Caco-2 (cell line): ENCODE measurements at regions of chr1 and their contacts with region 1.

Region 1: DNA sequence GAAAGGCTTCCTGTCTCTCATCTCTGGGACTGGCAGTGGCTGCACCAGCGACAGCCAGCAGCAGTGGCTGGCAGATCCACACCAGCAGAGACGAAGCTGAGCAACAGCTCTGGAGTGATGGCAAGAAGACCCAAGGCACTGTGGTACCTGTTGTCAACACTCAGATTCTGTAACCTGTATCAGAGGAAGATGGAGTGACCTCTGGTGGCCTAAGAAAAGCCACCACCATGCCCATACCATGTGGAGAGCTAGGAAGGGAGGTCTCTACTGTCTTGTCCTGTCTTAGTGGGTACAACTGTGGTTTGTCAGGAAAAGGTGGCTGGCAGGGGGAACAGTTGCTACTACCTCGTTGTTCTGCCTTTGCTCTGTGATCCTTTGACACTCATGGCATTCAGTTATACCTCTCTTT is 22.5 kb upstream of the RHBDL2 start:
- DNase-seq: peak in 1 of 2 experiments; percentile 10
- H3K4me3 ChIP-seq: no peak overlapping the region
- H3K4me3 Mint-ChIP-seq: no peak overlapping the region
- H3K27ac Mint-ChIP-seq: no peak overlapping the region
- H3K4me1 ChIP-seq: peaks cover 11% of the 10 kb centered on the region
- H3K4me1 Mint-ChIP-seq: peaks cover 18% of the 10 kb centered on the region
- H3K27me3 ChIP-seq: no peaks in the 10 kb centered on the region
- H3K27me3 Mint-ChIP-seq: no peaks in the 10 kb centered on the region
- CTCF ChIP-seq: peak in 1 of 2 experiments; percentile 17

Region 2: DNA sequence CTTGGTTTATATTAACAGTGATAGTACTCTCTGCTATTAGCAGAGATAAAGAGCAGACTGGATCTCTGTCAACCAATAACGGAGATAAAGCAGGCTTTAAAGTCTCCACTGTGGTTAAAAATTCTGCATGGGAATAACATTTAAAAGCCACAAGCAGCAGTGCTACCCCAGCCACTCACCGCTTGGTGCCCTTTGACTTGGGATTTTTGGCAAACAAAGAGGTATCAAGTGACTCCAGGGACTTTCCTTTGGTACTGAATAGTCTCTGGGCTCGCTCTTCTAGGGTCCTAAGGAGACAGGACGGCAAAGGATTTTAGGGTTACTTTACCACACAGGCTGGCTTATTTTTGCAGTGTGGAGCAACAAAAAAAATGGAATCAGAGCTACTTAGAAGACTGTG is 985.6 kb before region 1 on chr1:
- CTCF ChIA-PET with region 1: no interaction called
- POLR2A ChIA-PET with region 1: no interaction called
- intact Hi-C with region 1: no loop called
- DNase-seq: no peak
- H3K4me3 ChIP-seq: no peak overlapping the region
- H3K4me3 Mint-ChIP-seq: no peak overlapping the region
- H3K27ac Mint-ChIP-seq: no peak overlapping the region
- H3K4me1 ChIP-seq: peaks cover 7% of the 10 kb centered on the region
- H3K4me1 Mint-ChIP-seq: peaks cover 8% of the 10 kb centered on the region
- H3K27me3 ChIP-seq: no peaks in the 10 kb centered on the region
- H3K27me3 Mint-ChIP-seq: no peaks in the 10 kb centered on the region
- CTCF ChIP-seq: no peak

Region 3: DNA sequence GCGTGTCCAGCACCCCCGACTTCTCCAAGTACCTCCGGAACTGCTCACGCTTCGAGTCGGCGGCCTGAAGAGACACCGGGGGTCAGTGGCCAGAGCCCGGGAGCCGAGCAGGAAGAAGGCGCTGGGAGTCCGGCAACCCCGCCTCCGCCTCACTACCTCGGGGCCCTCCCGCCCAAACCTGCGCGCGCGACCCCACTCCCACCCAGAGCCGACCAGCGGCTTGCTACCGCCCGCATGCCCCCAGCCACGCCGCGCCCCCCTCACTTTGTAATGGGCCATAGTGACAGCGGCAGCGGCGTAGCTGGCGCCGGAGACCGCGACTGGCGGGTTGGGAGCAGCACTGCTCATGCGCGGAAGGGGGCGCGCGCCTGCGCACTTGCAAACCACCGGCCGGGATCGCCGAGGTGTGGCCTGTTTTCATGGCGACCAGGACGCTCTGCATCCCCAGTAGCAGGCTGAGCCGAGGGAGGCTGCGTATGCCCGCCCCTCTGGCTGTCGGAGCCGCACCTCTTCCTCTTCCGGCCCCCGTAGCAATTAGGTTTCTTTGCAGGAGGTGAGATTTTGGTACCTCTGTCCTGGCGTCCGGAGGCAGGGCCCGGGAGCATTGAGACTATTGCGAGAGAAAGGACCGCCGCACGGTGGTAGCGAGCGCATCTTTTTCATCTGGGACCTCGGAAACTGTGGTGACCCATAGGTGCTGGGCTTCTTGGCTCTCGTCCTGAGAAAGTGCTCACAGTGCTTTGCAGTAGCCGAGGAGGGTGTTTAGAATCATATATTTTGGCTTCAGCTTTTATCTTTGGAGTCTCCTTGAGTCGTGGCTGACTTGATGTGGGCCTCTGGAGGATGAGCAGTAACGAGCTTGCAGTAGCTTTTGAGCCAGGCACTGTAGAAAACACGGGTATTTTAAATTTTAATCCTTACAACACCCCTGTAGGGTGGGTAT is 90.8 kb before region 1 on chr1 and contains the start of gene MYCBP:
- CTCF ChIA-PET with region 1: no interaction called
- POLR2A ChIA-PET with region 1: no interaction called
- intact Hi-C with region 1: loop called (anchors 5 kb)
- DNase-seq: peak; percentile 93 to 94
- H3K4me3 ChIP-seq: peak within 1 kb of the TSS; percentile 59
- H3K4me3 Mint-ChIP-seq: peak within 1 kb of the TSS; percentile 78
- H3K27ac Mint-ChIP-seq: no peak within 1 kb of the TSS
- H3K4me1 ChIP-seq: no peaks in the 10 kb centered on the region
- H3K4me1 Mint-ChIP-seq: peaks cover 7% of the 10 kb centered on the region
- H3K27me3 ChIP-seq: no peaks in the 10 kb centered on the region
- H3K27me3 Mint-ChIP-seq: no peaks in the 10 kb centered on the region
- CTCF ChIP-seq: no peak
- total RNA-seq, gene MYCBP: 21.8 and 27.7 TPM in 2 replicates

Region 4: GRCh38 chr1:38919130-38919529 is 45.0 kb before region 1 on chr1:
- CTCF ChIA-PET with region 1: interaction called, 3 read pairs
- POLR2A ChIA-PET with region 1: no interaction called
- intact Hi-C with region 1: loop called (anchors 2 kb)
- DNase-seq: peak; percentile 34 to 45
- H3K4me3 ChIP-seq: no peak overlapping the region
- H3K4me3 Mint-ChIP-seq: no peak overlapping the region
- H3K27ac Mint-ChIP-seq: no peak overlapping the region
- H3K4me1 ChIP-seq: peaks cover 4% of the 10 kb centered on the region; the same call in 1 of the 2 replicates
- H3K4me1 Mint-ChIP-seq: no peaks in the 10 kb centered on the region
- H3K27me3 ChIP-seq: no peaks in the 10 kb centered on the region
- H3K27me3 Mint-ChIP-seq: no peaks in the 10 kb centered on the region
- CTCF ChIP-seq: peak in 1 of 2 experiments; percentile 37

Region 5: DNA sequence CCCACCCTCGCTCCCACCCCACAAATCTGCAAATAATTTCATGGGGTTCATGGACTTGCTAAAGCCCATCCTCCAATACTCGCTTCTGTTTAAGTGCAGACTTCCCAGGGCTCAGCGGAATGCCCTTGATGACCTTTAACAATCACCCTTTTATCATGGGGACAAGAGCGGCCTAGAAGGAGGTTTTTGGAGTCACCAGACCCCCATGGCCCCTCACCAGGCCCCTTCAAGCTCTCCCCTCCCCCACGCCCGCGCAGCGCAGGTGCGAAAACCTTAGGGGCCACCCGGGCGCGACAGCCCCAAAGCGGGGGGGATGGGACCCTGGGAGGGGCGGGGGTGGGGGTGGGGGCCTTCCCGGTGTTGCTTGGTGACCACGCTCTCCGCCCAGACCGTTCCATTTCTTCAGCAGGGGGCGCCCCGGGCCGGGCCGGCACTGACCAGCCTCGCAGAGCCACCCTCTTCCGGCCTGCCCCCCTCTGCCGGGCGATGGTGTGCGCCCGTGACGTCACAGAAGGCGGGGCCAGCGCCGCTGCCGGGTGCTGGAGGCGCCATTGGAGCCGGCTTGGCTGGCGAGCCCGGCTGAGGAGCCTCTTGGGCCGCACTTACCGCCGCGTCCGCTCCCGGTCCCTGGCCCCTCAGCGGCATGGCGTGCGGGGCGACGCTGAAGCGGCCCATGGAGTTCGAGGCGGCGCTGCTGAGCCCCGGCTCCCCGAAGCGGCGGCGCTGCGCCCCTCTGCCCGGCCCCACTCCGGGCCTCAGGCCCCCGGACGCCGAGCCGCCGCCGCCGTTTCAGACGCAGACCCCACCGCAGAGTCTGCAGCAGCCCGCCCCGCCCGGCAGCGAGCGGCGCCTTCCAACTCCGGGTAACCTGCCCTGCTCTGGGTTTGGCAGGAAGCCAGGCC is 26.8 kb after region 1 on chr1 and contains the start of gene AKIRIN1:
- CTCF ChIA-PET with region 1: interaction called, 3 read pairs
- POLR2A ChIA-PET with region 1: no interaction called
- intact Hi-C with region 1: loop called (anchors 2 kb)
- DNase-seq: peak; percentile 98
- H3K4me3 ChIP-seq: peak within 1 kb of the TSS; percentile 67
- H3K4me3 Mint-ChIP-seq: peak within 1 kb of the TSS; percentile 90
- H3K27ac Mint-ChIP-seq: peak within 1 kb of the TSS; percentile 85
- H3K4me1 ChIP-seq: peaks cover 23% of the 10 kb centered on the region
- H3K4me1 Mint-ChIP-seq: peaks cover 21% of the 10 kb centered on the region
- H3K27me3 ChIP-seq: no peaks in the 10 kb centered on the region
- H3K27me3 Mint-ChIP-seq: no peaks in the 10 kb centered on the region
- CTCF ChIP-seq: no peak
- total RNA-seq, gene AKIRIN1: 59.4 and 68.4 TPM in 2 replicates

Region 6: GRCh38 chr1:39132505-39133339 is 168.6 kb after region 1 on chr1:
- CTCF ChIA-PET with region 1: no interaction called
- POLR2A ChIA-PET with region 1: no interaction called
- intact Hi-C with region 1: no loop called
- DNase-seq: peak; percentile 88 to 93
- H3K4me3 ChIP-seq: no peak overlapping the region
- H3K4me3 Mint-ChIP-seq: peak overlapping the region; percentile 50
- H3K27ac Mint-ChIP-seq: peak overlapping the region; percentile 77
- H3K4me1 ChIP-seq: peaks cover 22% of the 10 kb centered on the region
- H3K4me1 Mint-ChIP-seq: peaks cover 18% of the 10 kb centered on the region
- H3K27me3 ChIP-seq: no peaks in the 10 kb centered on the region
- H3K27me3 Mint-ChIP-seq: no peaks in the 10 kb centered on the region
- CTCF ChIP-seq: peak in 1 of 2 experiments; percentile 52